H1 (cell line): ENCODE measurements at regions of chr16 and their contacts with region 1.

Region 1: GRCh38 chr16:3150346-3151218 is 15.8 kb downstream of the ZNF213 start:
- DNase-seq: peak; percentile 96 to 100
- H3K4me3 ChIP-seq: peak overlapping the region; percentile 68 to 90 (median 74)
- H3K27ac ChIP-seq: no peak overlapping the region
- H3K4me1 ChIP-seq: peaks cover 0 to 5% (median 3%) of the 10 kb centered on the region in 4 experiments; a peak in 4 of 7 replicates
- H3K27me3 ChIP-seq: peaks cover 0 to 18% (median 12%) of the 10 kb centered on the region in 4 experiments; a peak in 5 of 7 replicates
- CTCF ChIP-seq: no peak
- EP300 ChIP-seq: no peak
- POLR2A ChIP-seq: no peak
- RAD21 ChIP-seq: no peak

Region 2: GRCh38 chr16:3112058-3112880 is 38.3 kb before region 1 on chr16 and contains the start of gene ZNF205:
- CTCF ChIA-PET with region 1: interaction called, 21 read pairs
- POLR2A ChIA-PET with region 1: interaction called, 4 read pairs
- DNase-seq: peak in 1 of 2 experiments; percentile 92
- H3K4me3 ChIP-seq: peak within 1 kb of the TSS; percentile 85 to 93 (median 92)
- H3K27ac ChIP-seq: peak within 1 kb of the TSS; percentile 51; the same call in 1 of the 2 replicates
- H3K4me1 ChIP-seq: peaks cover 0 to 15% (median 8%) of the 10 kb centered on the region in 4 experiments; a peak in 5 of 7 replicates
- H3K27me3 ChIP-seq: no peaks in the 10 kb centered on the region
- CTCF ChIP-seq: 0 out of 4 replicates have a peak, but pooled peaks of 1 of the 3 experiments have one; percentile 14
- EP300 ChIP-seq: peak in 1 of 2 experiments; percentile 79; a peak in 1 of 3 replicates
- POLR2A ChIP-seq: no peak
- RAD21 ChIP-seq: peak; percentile 17 to 36; a peak in 2 of 4 replicates
- total RNA-seq, gene ZNF205: 17.0 and 19.1 TPM in 2 replicates

Region 3: DNA sequence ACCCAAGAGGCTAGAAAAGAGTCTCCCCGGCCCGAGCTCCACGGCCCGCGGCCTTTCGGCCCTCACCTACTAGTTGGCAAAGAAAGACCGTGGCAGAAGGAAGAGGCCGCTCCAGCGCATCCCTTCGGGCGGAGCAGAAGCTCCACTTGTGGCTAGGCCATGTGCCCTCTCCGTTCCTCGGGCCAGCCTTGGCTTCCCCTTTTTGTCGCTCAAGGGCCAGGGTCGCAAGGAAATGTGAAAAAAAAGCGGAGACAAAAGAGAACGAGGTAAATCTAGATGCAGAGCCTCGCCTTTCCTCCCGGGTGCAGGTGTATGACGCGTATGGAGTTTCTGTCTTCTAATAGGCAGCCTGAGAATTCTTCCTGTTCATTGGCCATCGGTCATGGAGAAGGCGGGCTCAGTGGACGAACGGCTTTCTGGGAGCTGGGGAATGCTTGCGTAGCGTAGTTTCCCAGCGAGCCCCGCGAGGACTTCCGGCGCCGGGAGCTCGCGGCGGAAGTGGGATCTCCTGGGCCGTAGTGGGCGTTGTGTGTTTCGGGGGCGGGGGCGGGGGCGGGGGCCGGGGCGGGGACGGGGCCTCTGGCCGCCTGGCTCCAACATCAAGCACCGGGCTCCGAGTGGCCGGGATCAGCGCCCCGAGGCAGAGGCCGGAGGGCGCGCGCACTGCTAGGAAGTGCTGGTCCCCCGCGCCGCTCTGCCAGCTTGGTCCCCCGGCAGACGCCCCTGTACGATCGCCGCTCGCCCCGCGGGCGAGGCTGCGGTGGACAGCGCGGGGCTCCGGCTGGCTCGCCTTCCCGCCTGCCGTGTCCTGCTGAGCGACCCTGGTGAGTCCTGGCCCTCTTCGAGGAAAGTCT is 15.8 kb before region 1 on chr16 and contains the start of gene ZNF213:
- CTCF ChIA-PET with region 1: interaction called, 174 read pairs
- POLR2A ChIA-PET with region 1: interaction called, 43 read pairs
- DNase-seq: peak; percentile 88 to 93
- H3K4me3 ChIP-seq: peak within 1 kb of the TSS; percentile 86 to 96 (median 90)
- H3K27ac ChIP-seq: peak within 1 kb of the TSS; percentile 97
- H3K4me1 ChIP-seq: peaks cover 0 to 2% (median 0%) of the 10 kb centered on the region in 4 experiments; a peak in 1 of 7 replicates
- H3K27me3 ChIP-seq: no peaks in the 10 kb centered on the region
- CTCF ChIP-seq: no peak
- EP300 ChIP-seq: no peak
- POLR2A ChIP-seq: peak in 1 of 2 experiments; percentile 92; a peak in 2 of 3 replicates
- RAD21 ChIP-seq: no peak
- total RNA-seq, gene ZNF213: 6.9 and 7.3 TPM in 2 replicates

Region 4: GRCh38 chr16:3165111-3165822 is 14.7 kb after region 1 on chr16:
- CTCF ChIA-PET with region 1: interaction called, 36 read pairs
- POLR2A ChIA-PET with region 1: interaction called, 25 read pairs
- DNase-seq: no peak
- H3K4me3 ChIP-seq: no peak overlapping the region
- H3K27ac ChIP-seq: no peak overlapping the region
- H3K4me1 ChIP-seq: 0 out of 7 replicates have a peak, but pooled peaks cover 0 to 3% (median 0%) of the 10 kb centered on the region in 4 experiments
- H3K27me3 ChIP-seq: peaks cover 0 to 12% (median 4%) of the 10 kb centered on the region in 4 experiments; a peak in 5 of 7 replicates
- CTCF ChIP-seq: no peak
- EP300 ChIP-seq: no peak
- POLR2A ChIP-seq: no peak
- RAD21 ChIP-seq: no peak

Region 5: GRCh38 chr16:3173892-3174617 is 23.5 kb after region 1 on chr16:
- CTCF ChIA-PET with region 1: interaction called, 36 read pairs
- POLR2A ChIA-PET with region 1: interaction called, 25 read pairs
- DNase-seq: peak in 1 of 2 experiments; percentile 95
- H3K4me3 ChIP-seq: peak overlapping the region; percentile 28 to 71 (median 34); a peak in 5 of 8 replicates
- H3K27ac ChIP-seq: no peak overlapping the region
- H3K4me1 ChIP-seq: peaks cover 0 to 10% (median 6%) of the 10 kb centered on the region in 4 experiments; a peak in 5 of 7 replicates
- H3K27me3 ChIP-seq: peaks cover 0 to 25% (median 15%) of the 10 kb centered on the region in 4 experiments; a peak in 5 of 7 replicates
- CTCF ChIP-seq: peak; percentile 63 to 75 (median 72)
- EP300 ChIP-seq: no peak
- POLR2A ChIP-seq: no peak
- RAD21 ChIP-seq: no peak; a peak in 1 of 4 replicates

Region 6: DNA sequence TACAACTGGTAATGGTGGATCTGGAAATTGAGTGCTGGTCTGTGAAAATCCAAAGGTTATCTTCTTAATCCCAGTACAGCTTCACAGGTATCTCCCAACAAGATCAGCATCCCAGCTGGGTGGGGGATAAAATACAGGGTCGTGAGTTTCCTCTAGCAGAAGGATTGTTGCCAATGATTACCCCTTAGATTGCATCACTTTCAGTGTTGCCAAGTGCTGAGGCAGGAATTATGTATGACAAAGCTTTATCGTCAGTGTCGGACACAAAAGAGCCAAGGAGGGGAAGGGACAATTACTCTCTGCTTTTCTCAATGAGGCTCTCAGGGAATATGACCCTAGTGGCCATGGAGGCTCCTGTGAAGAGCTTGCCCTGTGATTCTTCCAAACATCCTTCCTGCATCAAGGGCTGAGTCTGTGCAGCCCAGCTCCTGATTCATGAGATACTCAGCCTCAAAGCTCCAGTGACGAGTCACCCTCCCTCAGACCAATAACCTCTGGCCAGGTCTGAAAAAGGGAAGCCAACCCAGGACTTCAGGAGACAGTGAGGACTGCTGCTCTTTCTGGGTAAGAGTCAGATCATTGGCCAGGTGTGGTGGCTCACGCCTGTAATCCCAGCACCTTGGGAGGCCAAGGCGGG is 52.4 kb after region 1 on chr16:
- CTCF ChIA-PET with region 1: no interaction called
- POLR2A ChIA-PET with region 1: no interaction called
- DNase-seq: no peak
- H3K4me3 ChIP-seq: no peak overlapping the region
- H3K27ac ChIP-seq: no peak overlapping the region
- H3K4me1 ChIP-seq: no peaks in the 10 kb centered on the region
- H3K27me3 ChIP-seq: no peaks in the 10 kb centered on the region; a peak in 1 of 7 replicates
- CTCF ChIP-seq: no peak
- EP300 ChIP-seq: no peak
- POLR2A ChIP-seq: no peak
- RAD21 ChIP-seq: no peak